ENCODE measurements at regions of chr3 and their contacts with region 1.

Region 1: GRCh38 chr3:11335056-11335608 is 62.9 kb downstream of the ATG7 start:
- DNase-seq: no peak
- H3K4me3 ChIP-seq: no peak overlapping the region
- H3K27ac ChIP-seq: no peak overlapping the region
- H3K4me1 ChIP-seq: no peaks in the 10 kb centered on the region
- H3K27me3 ChIP-seq: no peaks in the 10 kb centered on the region
- CTCF ChIP-seq: peak; percentile 15 to 62 (median 42)
- POLR2A ChIP-seq: no peak

Region 2: DNA sequence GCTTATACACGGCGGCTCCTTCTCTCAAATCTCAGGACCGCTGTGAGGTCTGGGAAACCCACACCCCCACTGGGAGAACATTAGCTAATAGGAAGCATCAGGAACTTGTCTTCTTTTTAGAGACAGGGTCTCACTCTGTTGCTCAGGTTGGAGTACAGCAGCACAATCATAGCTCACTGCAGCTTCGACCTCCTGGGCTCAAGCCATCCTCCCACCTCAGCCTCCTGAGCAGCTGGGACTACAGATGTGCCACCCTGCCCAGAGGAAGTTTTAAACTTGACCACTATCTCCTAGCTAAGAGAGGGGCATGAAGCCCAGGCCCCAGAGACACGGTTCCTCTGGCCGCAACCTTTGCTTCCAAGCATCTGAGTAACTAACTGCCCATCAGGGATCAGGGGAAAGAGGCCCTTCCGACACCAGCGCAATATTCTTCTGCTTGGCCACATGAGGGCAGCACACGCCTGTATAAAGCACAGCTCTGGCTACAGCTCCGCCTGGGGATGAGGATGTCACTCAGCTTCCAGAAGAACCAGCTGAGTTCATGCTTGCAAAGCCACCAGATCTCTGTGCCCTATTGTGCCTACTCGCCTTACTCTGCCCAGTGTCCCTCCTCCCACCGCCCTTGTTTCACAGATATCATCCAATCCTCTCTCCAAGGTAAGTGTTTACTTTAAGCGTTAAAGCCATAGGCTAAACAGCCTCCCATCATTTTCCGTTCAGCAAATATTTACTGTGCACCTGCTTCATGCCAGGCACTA is 576.6 kb before region 1 on chr3:
- intact Hi-C with region 1: no loop called
- DNase-seq: peak; percentile 45 to 57
- H3K4me3 ChIP-seq: no peak overlapping the region
- H3K27ac ChIP-seq: no peak overlapping the region
- H3K4me1 ChIP-seq: no peaks in the 10 kb centered on the region
- H3K27me3 ChIP-seq: no peaks in the 10 kb centered on the region
- CTCF ChIP-seq: peak in 5 of 6 experiments; percentile 46 to 84 (median 69)
- POLR2A ChIP-seq: no peak

Region 3: GRCh38 chr3:11155341-11156025 is 179.6 kb before region 1 on chr3:
- intact Hi-C with region 1: loop called (anchors 10 kb)
- DNase-seq: peak; percentile 57 to 58
- H3K4me3 ChIP-seq: peak overlapping the region in 1 of 3 donors; percentile 26
- H3K27ac ChIP-seq: no peak overlapping the region
- H3K4me1 ChIP-seq: peaks cover 4 to 6% of the 10 kb centered on the region in 2 donors
- H3K27me3 ChIP-seq: peaks cover 7% of the 10 kb centered on the region
- CTCF ChIP-seq: peak in 5 of 6 experiments; percentile 10 to 58 (median 45)
- POLR2A ChIP-seq: no peak

Measured in thyroid gland (tissue), 4 donors.